A549 (cell line): ENCODE measurements at regions of chr16 and their contacts with region 1.

Region 1: GRCh38 chr16:55944377-55944802 is 69.2 kb upstream of the CES5A start:
- DNase-seq: peak; percentile 36 to 46
- ATAC-seq: peak; percentile 82 to 95; a peak in 5 of 6 replicates
- H3K4me3 ChIP-seq: no peak overlapping the region
- H3K27ac ChIP-seq: no peak overlapping the region
- H3K4me1 ChIP-seq: no peaks in the 10 kb centered on the region
- CTCF ChIP-seq: peak; percentile 77
- EP300 ChIP-seq: no peak
- POLR2A ChIP-seq: no peak
- RAD21 ChIP-seq: peak; percentile 57 to 75

Region 2: DNA sequence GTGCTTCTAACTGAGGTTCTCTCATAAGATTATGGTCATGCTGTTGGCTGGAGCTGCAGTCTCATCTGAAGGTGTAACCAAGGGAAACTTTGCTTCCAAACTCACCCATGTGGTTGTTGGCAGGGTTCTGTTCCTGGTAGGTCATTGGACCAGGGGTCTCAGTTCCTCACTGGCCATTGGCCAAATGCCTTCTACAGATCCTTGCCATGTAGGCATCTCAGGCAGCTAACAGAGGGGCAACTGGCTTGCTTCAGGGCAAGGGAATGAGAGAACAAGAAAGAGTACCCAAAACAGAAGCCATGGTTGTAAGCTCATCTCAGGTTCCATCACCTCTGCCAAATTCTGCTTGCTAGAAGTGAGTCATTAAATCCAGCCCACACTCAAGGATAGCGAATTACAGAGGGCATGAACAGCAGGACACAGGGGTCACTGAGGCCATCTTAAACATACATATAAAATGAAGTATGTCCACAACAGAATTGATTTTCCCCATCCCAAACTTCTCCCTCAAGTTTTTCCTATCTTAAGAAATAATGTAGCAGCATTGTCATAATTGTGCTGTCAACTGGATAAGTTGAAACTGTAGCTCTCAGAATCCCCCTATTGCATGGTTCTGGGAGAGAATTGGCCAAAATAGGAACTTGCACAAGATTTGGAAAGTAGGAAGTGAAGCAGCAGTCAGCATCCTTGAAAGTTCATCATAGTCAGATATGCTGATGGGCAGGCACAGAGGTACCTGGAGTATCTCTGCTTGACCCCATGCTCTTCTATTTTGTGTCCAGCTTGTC is 26.8 kb before region 1 on chr16:
- CTCF ChIA-PET with region 1: interaction called, 12 read pairs
- POLR2A ChIA-PET with region 1: no interaction called
- DNase-seq: no peak
- ATAC-seq: no peak
- H3K4me3 ChIP-seq: no peak overlapping the region
- H3K27ac ChIP-seq: no peak overlapping the region
- H3K4me1 ChIP-seq: no peaks in the 10 kb centered on the region
- CTCF ChIP-seq: no peak
- EP300 ChIP-seq: no peak
- POLR2A ChIP-seq: no peak
- RAD21 ChIP-seq: no peak

Region 3: GRCh38 chr16:55955845-55956244 is 11.5 kb after region 1 on chr16:
- CTCF ChIA-PET with region 1: interaction called, 51 read pairs
- POLR2A ChIA-PET with region 1: no interaction called
- DNase-seq: no peak
- ATAC-seq: no peak
- H3K4me3 ChIP-seq: no peak overlapping the region
- H3K27ac ChIP-seq: no peak overlapping the region
- H3K4me1 ChIP-seq: no peaks in the 10 kb centered on the region
- CTCF ChIP-seq: no peak
- EP300 ChIP-seq: no peak
- POLR2A ChIP-seq: no peak
- RAD21 ChIP-seq: no peak

Region 4: GRCh38 chr16:56246051-56246817 is 301.8 kb after region 1 on chr16:
- CTCF ChIA-PET with region 1: interaction called, 10 read pairs
- POLR2A ChIA-PET with region 1: no interaction called
- DNase-seq: peak in 1 of 2 experiments; percentile 54
- ATAC-seq: peak; percentile 79 to 86
- H3K4me3 ChIP-seq: no peak overlapping the region
- H3K27ac ChIP-seq: peak overlapping the region in 1 of 2 experiments; percentile 62; a peak in 2 of 6 replicates
- H3K4me1 ChIP-seq: peaks cover 18% of the 10 kb centered on the region
- CTCF ChIP-seq: no peak
- EP300 ChIP-seq: no peak
- POLR2A ChIP-seq: no peak
- RAD21 ChIP-seq: no peak

Region 5: GRCh38 chr16:56311208-56312027 is 367.0 kb after region 1 on chr16:
- CTCF ChIA-PET with region 1: interaction called, 27 read pairs
- POLR2A ChIA-PET with region 1: no interaction called
- DNase-seq: no peak
- ATAC-seq: peak in 1 of 2 experiments; percentile 80; a peak in 3 of 6 replicates
- H3K4me3 ChIP-seq: no peak overlapping the region
- H3K27ac ChIP-seq: no peak overlapping the region
- H3K4me1 ChIP-seq: no peaks in the 10 kb centered on the region
- CTCF ChIP-seq: 0 out of 3 replicates have a peak, but pooled peaks have one; percentile 11
- EP300 ChIP-seq: no peak
- POLR2A ChIP-seq: no peak
- RAD21 ChIP-seq: 0 out of 5 replicates have a peak, but pooled peaks of 1 of the 2 experiments have one; percentile 10